ENCODE measurements at regions of chr18 and their contacts with region 1.

Region 1: DNA sequence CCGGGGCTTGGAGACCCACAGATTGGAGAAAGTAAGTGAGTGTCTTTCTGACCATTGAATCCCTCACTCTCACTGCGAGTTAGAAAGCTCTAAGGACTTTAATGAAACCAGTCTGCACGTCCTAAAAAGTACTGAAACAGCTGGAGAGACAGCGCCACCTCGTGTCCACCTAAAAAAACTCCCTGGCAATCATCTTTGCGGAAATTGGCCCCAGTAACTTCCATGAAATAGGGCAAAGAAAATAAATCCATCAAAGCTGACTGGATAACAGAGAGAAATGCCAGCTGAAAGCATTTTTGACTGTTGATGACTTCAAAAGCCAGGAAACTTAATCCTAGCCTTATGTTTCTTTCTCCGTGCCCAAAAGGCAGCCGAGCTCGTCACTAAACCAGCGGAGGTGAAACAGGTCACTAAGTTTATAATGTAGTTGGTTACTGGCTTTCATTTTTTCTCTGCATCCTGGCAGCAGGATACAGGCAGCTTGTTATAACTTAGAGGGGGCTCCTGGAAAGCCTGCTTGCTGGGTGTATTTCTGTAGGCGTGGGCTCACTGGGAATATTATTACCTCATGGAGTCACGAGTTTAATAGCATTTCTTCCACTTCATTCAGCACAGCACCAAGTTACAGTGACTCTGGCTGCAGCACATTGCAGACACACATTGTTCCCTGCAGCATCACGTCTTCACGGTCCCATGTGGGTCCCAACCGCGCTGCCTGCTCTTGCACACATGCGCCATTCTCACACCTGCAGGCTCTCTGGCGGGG is 266.5 kb downstream of the HRH4 start:
- DNase-seq: peak; percentile 30 to 33
- ATAC-seq: peak; percentile 62 to 75
- H3K4me3 ChIP-seq: peak overlapping the region; percentile 36 to 47 (median 41)
- H3K27ac ChIP-seq: no peak overlapping the region
- H3K4me1 ChIP-seq: peaks cover 0 to 5% of the 10 kb centered on the region in 2 donors
- H3K27me3 ChIP-seq: peaks cover 0 to 5% (median 0%) of the 10 kb centered on the region in 3 donors
- CTCF ChIP-seq: peak; percentile 44 to 81 (median 67)
- POLR2A ChIP-seq: no peak

Region 2: GRCh38 chr18:24362758-24363157 is 364.2 kb before region 1 on chr18:
- in situ Hi-C with region 1: loop called in 2 of 4 experiments (anchors 25 kb)
- intact Hi-C with region 1: loop called (anchors 5 kb)
- DNase-seq: no peak
- ATAC-seq: no peak
- H3K4me3 ChIP-seq: no peak overlapping the region
- H3K27ac ChIP-seq: no peak overlapping the region
- H3K4me1 ChIP-seq: no peaks in the 10 kb centered on the region
- H3K27me3 ChIP-seq: no peaks in the 10 kb centered on the region
- CTCF ChIP-seq: no peak
- POLR2A ChIP-seq: no peak

Region 3: GRCh38 chr18:24368749-24369148 is 358.2 kb before region 1 on chr18:
- in situ Hi-C with region 1: loop called in 2 of 4 experiments (anchors 25 kb)
- intact Hi-C with region 1: no loop called
- DNase-seq: no peak
- ATAC-seq: no peak
- H3K4me3 ChIP-seq: no peak overlapping the region
- H3K27ac ChIP-seq: no peak overlapping the region
- H3K4me1 ChIP-seq: no peaks in the 10 kb centered on the region
- H3K27me3 ChIP-seq: no peaks in the 10 kb centered on the region
- CTCF ChIP-seq: no peak
- POLR2A ChIP-seq: no peak

Region 4: DNA sequence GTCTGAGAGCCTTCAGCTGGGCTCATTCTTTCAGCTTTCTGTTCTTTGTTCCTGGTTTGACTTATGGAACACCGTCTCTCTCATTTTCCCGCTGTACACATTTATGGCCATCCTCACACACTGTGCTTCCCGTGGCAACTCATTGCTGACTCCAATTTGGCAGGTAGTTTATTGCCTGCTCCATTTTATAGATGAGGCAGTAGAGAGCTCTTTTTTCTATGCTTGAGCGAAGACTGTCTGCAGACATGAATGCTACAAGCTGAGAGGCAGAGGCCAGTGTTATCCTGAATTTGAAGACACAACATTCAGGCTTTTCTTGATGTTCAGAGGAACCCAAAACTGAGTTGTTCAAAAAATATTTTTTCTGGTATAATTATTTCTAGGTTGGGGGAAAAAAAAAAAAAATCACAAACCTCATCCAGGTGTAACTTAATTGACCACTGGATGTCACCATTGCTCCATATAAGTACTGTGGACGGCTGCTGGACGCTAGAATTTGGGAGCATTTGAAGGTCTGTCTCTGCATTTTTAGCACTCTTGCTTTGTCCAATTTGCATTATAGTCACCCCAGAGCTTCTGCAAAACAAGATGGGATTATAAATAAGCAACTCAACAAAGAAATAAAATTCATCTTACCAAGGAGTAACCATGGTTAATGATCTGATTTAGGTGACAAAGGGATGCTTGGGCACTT is 183.0 kb before region 1 on chr18:
- in situ Hi-C with region 1: no loop called
- intact Hi-C with region 1: loop called (anchors 5 kb)
- DNase-seq: no peak
- ATAC-seq: no peak
- H3K4me3 ChIP-seq: no peak overlapping the region
- H3K27ac ChIP-seq: no peak overlapping the region
- H3K4me1 ChIP-seq: no peaks in the 10 kb centered on the region
- H3K27me3 ChIP-seq: no peaks in the 10 kb centered on the region
- CTCF ChIP-seq: peak in 2 of 5 experiments; percentile 25 to 26
- POLR2A ChIP-seq: no peak

Region 5: GRCh38 chr18:24600076-24600654 is 126.7 kb before region 1 on chr18:
- in situ Hi-C with region 1: loop called (anchors 5 to 10 kb)
- intact Hi-C with region 1: loop called (anchors 1 kb)
- DNase-seq: no peak
- ATAC-seq: no peak
- H3K4me3 ChIP-seq: no peak overlapping the region
- H3K27ac ChIP-seq: no peak overlapping the region
- H3K4me1 ChIP-seq: no peaks in the 10 kb centered on the region
- H3K27me3 ChIP-seq: no peaks in the 10 kb centered on the region
- CTCF ChIP-seq: peak in 4 of 5 experiments; percentile 24 to 56 (median 36)
- POLR2A ChIP-seq: no peak